Activated CD4-positive, alpha-beta memory T cell treated with anti-CD3 and anti-CD28 coated beads for 36 hours (primary cell): ENCODE measurements at regions of chr5 and their contacts with region 1.

Region 1: GRCh38 chr5:140351609-140352334 is 5.4 kb upstream of the HBEGF start:
- DNase-seq: peak; percentile 34
- H3K4me3 Mint-ChIP-seq: peak overlapping the region; percentile 23
- H3K27ac Mint-ChIP-seq: no peak overlapping the region
- H3K4me1 Mint-ChIP-seq: peaks cover 10% of the 10 kb centered on the region
- H3K27me3 Mint-ChIP-seq: peaks cover 1% of the 10 kb centered on the region

Region 2: GRCh38 chr5:140251527-140251973 is 100.2 kb before region 1 on chr5:
- CTCF ChIA-PET with region 1: interaction called, 744 read pairs
- POLR2A ChIA-PET with region 1: no interaction called
- intact Hi-C with region 1: loop called (anchors 2 kb)
- DNase-seq: peak; percentile 90
- H3K4me3 Mint-ChIP-seq: no peak overlapping the region
- H3K27ac Mint-ChIP-seq: peak overlapping the region; percentile 73
- H3K4me1 Mint-ChIP-seq: peaks cover 41% of the 10 kb centered on the region
- H3K27me3 Mint-ChIP-seq: no peaks in the 10 kb centered on the region

Region 3: GRCh38 chr5:140302786-140303639 is 48.8 kb before region 1 on chr5 and contains the start of gene PFDN1:
- CTCF ChIA-PET with region 1: interaction called, 27 read pairs
- POLR2A ChIA-PET with region 1: no interaction called
- intact Hi-C with region 1: no loop called
- DNase-seq: peak; percentile 95
- H3K4me3 Mint-ChIP-seq: peak within 1 kb of the TSS; percentile 98
- H3K27ac Mint-ChIP-seq: peak within 1 kb of the TSS; percentile 85
- H3K4me1 Mint-ChIP-seq: peaks cover 26% of the 10 kb centered on the region
- H3K27me3 Mint-ChIP-seq: no peaks in the 10 kb centered on the region
- total RNA-seq, gene PFDN1: 50.1 to 54.6 TPM

Region 4: GRCh38 chr5:140327589-140327988 is 24.2 kb before region 1 on chr5:
- CTCF ChIA-PET with region 1: interaction called, 13 read pairs
- POLR2A ChIA-PET with region 1: no interaction called
- intact Hi-C with region 1: no loop called
- DNase-seq: no peak
- H3K4me3 Mint-ChIP-seq: no peak overlapping the region
- H3K27ac Mint-ChIP-seq: no peak overlapping the region
- H3K4me1 Mint-ChIP-seq: peaks cover 5% of the 10 kb centered on the region
- H3K27me3 Mint-ChIP-seq: no peaks in the 10 kb centered on the region

Region 5: GRCh38 chr5:140372971-140373487 is 21.3 kb after region 1 on chr5:
- CTCF ChIA-PET with region 1: interaction called, 10 read pairs
- POLR2A ChIA-PET with region 1: no interaction called
- intact Hi-C with region 1: no loop called
- DNase-seq: peak; percentile 48
- H3K4me3 Mint-ChIP-seq: no peak overlapping the region
- H3K27ac Mint-ChIP-seq: no peak overlapping the region
- H3K4me1 Mint-ChIP-seq: peaks cover 3% of the 10 kb centered on the region
- H3K27me3 Mint-ChIP-seq: no peaks in the 10 kb centered on the region

Region 6: GRCh38 chr5:140513124-140513523 is 161.4 kb after region 1 on chr5:
- CTCF ChIA-PET with region 1: no interaction called
- POLR2A ChIA-PET with region 1: no interaction called
- intact Hi-C with region 1: no loop called
- DNase-seq: no peak
- H3K4me3 Mint-ChIP-seq: no peak overlapping the region
- H3K27ac Mint-ChIP-seq: no peak overlapping the region
- H3K4me1 Mint-ChIP-seq: no peaks in the 10 kb centered on the region
- H3K27me3 Mint-ChIP-seq: no peaks in the 10 kb centered on the region